A673 (cell line): ENCODE measurements at regions of chr1 and their contacts with region 1.

Region 1: GRCh38 chr1:87953732-87954344 is 625.2 kb downstream of the LMO4 start:
- DNase-seq: peak; percentile 89
- H3K4me3 ChIP-seq: no peak overlapping the region
- H3K27ac ChIP-seq: no peak overlapping the region
- H3K4me1 ChIP-seq: peaks cover 12% of the 10 kb centered on the region
- H3K27me3 ChIP-seq: no peaks in the 10 kb centered on the region
- CTCF ChIP-seq: peak; percentile 88

Region 2: GRCh38 chr1:87131809-87132283 is 822.0 kb before region 1 on chr1:
- CTCF ChIA-PET with region 1: no interaction called
- POLR2A ChIA-PET with region 1: no interaction called
- intact Hi-C with region 1: loop called (anchors 5 kb)
- DNase-seq: peak; percentile 82
- H3K4me3 ChIP-seq: peak overlapping the region; percentile 36
- H3K27ac ChIP-seq: peak overlapping the region; percentile 36
- H3K4me1 ChIP-seq: no peaks in the 10 kb centered on the region
- H3K27me3 ChIP-seq: no peaks in the 10 kb centered on the region
- CTCF ChIP-seq: peak; percentile 97

Region 3: GRCh38 chr1:87328272-87329050 is 625.4 kb before region 1 on chr1 and contains the start of gene LMO4:
- CTCF ChIA-PET with region 1: interaction called, 5 read pairs
- POLR2A ChIA-PET with region 1: no interaction called
- intact Hi-C with region 1: loop called (anchors 5 kb)
- DNase-seq: peak; percentile 99
- H3K4me3 ChIP-seq: peak within 1 kb of the TSS; percentile 86
- H3K27ac ChIP-seq: peak within 1 kb of the TSS; percentile 96
- H3K4me1 ChIP-seq: peaks cover 21% of the 10 kb centered on the region
- H3K27me3 ChIP-seq: no peaks in the 10 kb centered on the region
- CTCF ChIP-seq: no peak
- total RNA-seq, gene LMO4: 32.2 and 35.3 TPM in 2 replicates

Region 4: DNA sequence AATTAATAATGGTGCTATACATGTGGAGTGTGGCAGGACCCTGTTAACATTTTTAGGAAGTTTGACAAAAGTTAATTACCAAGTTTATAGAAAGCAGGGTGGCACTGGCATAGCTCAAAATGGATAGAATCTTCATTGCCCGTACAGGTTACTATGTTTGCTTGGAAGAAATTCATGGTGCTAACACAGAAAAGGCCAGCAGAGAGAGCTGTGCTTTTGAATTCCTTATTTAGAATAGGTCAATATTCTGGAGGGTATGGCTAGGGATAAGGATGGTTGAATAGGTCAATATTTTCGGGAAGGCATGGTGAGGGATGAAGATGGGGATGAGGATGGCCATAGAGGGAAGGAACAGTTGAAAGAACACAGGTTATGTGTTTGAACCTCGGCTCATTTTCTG is 280.1 kb before region 1 on chr1:
- CTCF ChIA-PET with region 1: interaction called, 4 read pairs
- POLR2A ChIA-PET with region 1: no interaction called
- intact Hi-C with region 1: loop called (anchors 5 kb)
- DNase-seq: peak; percentile 20
- H3K4me3 ChIP-seq: no peak overlapping the region
- H3K27ac ChIP-seq: no peak overlapping the region
- H3K4me1 ChIP-seq: peaks cover 6% of the 10 kb centered on the region
- H3K27me3 ChIP-seq: no peaks in the 10 kb centered on the region
- CTCF ChIP-seq: peak; percentile 41; the same call in 1 of the 2 replicates

Region 5: GRCh38 chr1:87794788-87795614 is 158.8 kb before region 1 on chr1:
- CTCF ChIA-PET with region 1: no interaction called
- POLR2A ChIA-PET with region 1: no interaction called
- intact Hi-C with region 1: loop called (anchors 5 kb)
- DNase-seq: peak; percentile 71
- H3K4me3 ChIP-seq: no peak overlapping the region
- H3K27ac ChIP-seq: no peak overlapping the region
- H3K4me1 ChIP-seq: peaks cover 10% of the 10 kb centered on the region
- H3K27me3 ChIP-seq: no peaks in the 10 kb centered on the region
- CTCF ChIP-seq: no peak

Region 6: GRCh38 chr1:88001460-88001859 is 47.6 kb after region 1 on chr1:
- CTCF ChIA-PET with region 1: no interaction called
- POLR2A ChIA-PET with region 1: no interaction called
- intact Hi-C with region 1: no loop called
- DNase-seq: no peak
- H3K4me3 ChIP-seq: no peak overlapping the region
- H3K27ac ChIP-seq: no peak overlapping the region
- H3K4me1 ChIP-seq: no peaks in the 10 kb centered on the region
- H3K27me3 ChIP-seq: no peaks in the 10 kb centered on the region
- CTCF ChIP-seq: no peak

Region 7: DNA sequence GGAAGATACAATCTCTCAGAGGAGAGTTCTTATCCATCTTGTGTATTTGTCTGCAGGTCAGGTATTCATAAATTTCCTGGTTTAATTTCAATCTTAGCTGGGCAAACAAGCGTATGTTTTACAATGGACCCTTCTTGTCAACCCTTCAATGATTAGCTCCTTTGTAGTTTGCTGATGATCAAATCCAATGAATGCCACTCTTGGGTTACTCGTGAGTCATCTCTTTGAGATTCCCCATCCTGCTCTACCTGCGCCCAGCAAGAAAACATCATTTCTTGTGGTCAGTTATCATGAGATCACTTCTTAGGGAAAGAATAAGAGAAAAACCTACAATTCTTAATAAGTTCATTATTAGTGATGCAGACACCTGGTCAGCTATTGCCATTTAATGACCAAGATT is 158.0 kb after region 1 on chr1:
- CTCF ChIA-PET with region 1: no interaction called
- POLR2A ChIA-PET with region 1: no interaction called
- intact Hi-C with region 1: no loop called
- DNase-seq: no peak
- H3K4me3 ChIP-seq: no peak overlapping the region
- H3K27ac ChIP-seq: no peak overlapping the region
- H3K4me1 ChIP-seq: no peaks in the 10 kb centered on the region
- H3K27me3 ChIP-seq: no peaks in the 10 kb centered on the region
- CTCF ChIP-seq: no peak